Cardiac septum (tissue), 1 donor: ENCODE measurements at regions of chr7 and their contacts with region 1.

Region 1: GRCh38 chr7:151459726-151460473 is 20.0 kb upstream of the CRYGN start:
- DNase-seq: peak; percentile 87

Region 2: DNA sequence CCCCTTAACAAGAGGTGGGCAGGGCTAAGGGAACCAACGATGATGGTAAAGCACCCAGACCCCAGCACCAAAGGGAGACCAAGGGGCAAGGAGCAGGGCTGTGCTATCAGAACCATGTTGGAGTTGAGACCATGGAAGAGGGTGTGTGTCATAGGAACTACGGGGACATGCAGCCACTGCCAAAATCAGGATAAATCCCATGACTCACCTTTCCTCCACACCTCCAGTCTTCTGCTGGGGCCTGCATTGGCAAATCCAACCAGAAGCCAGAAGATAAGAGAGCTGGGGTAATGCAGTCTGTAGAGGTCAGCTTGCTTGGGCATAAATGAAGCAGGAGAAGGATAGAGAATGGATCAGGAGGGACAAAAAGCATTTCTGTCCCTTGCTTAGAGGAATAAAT is 168.7 kb before region 1 on chr7:
- intact Hi-C with region 1: no loop called
- DNase-seq: peak; percentile 27

Region 3: GRCh38 chr7:151315038-151315655 is 144.8 kb before region 1 on chr7:
- intact Hi-C with region 1: loop called (anchors 5 kb)
- DNase-seq: peak; percentile 83

Region 4: DNA sequence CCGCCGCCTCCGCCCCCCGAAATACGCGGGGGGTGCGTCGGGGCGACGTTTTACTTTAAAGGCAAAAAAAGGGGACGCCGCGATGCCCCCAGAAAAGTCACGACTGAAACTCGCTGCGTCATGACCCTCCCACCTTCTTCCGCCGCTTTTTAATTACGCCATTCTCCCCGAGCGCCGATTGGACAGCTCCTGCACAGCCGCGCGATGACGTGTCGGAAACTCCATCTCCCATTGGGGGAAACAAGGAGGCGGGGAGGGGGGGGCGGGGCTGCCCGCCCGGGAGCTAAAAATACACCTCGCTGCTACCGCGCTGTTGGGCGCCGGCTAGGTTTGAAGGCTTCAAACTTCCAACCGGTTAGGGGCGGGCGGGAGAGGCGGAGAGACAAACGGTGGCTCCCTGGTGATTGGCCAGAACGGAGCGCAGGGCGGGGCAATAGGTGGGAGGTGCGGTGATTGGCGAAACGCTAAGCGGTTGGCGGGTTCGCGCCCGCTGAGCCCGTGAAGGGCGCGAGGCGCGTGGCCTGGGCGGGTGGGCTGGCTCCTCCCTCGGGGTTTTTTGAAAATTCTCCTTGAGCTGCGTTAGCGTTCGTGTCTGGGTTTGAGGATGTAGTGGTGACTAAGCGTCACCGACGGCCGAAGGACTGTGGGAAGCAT is 60.0 kb after region 1 on chr7 and contains the start of gene RHEB:
- intact Hi-C with region 1: loop called (anchors 5 kb)
- DNase-seq: peak; percentile 99
- total RNA-seq, gene RHEB: 113 TPM

Region 5: GRCh38 chr7:151626422-151627115 is 166.7 kb after region 1 on chr7:
- intact Hi-C with region 1: loop called (anchors 1 kb)
- DNase-seq: no peak

Region 6: GRCh38 chr7:151759591-151760042 is 299.7 kb after region 1 on chr7:
- intact Hi-C with region 1: loop called (anchors 5 kb)
- DNase-seq: peak; percentile 84